PC-9 (cell line): ENCODE measurements at regions of chr9 and their contacts with region 1.

Region 1: DNA sequence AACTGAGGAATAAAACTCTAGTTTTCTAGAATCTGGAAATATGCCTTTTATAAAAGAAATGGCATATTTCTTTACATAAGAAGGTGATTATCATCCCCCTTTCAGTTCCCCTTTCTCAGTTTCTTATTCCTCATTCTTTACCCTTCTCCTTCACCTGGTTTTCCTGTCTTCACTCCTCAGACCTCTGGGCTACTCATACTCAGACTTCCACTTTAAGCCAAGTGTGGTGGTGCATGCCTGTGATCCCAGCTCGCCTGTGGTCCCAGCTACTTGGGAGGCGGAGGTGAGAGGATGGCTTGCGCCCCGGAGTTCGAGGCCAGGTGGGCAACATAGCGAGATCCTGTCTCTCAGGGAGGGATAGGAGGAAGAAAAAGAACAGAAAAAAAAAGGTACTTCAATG is 57.2 kb downstream of the RANBP6 start:
- DNase-seq: no peak
- H3K4me3 ChIP-seq: no peak overlapping the region
- H3K27ac ChIP-seq: no peak overlapping the region
- H3K4me1 ChIP-seq: no peaks in the 10 kb centered on the region
- H3K27me3 ChIP-seq: no peaks in the 10 kb centered on the region
- CTCF ChIP-seq: no peak

Region 2: GRCh38 chr9:4679268-4680172 is 1278.8 kb before region 1 on chr9 and contains the start of gene CDC37L1:
- CTCF ChIA-PET with region 1: no interaction called
- POLR2A ChIA-PET with region 1: interaction called, 19 read pairs
- intact Hi-C with region 1: no loop called
- DNase-seq: peak; percentile 81 to 93
- H3K4me3 ChIP-seq: peak within 1 kb of the TSS; percentile 87
- H3K27ac ChIP-seq: peak within 1 kb of the TSS; percentile 82
- H3K4me1 ChIP-seq: peaks cover 20% of the 10 kb centered on the region
- H3K27me3 ChIP-seq: no peaks in the 10 kb centered on the region
- CTCF ChIP-seq: peak; percentile 63
- total RNA-seq, gene CDC37L1: 6.7 and 7.7 TPM in 2 replicates

Region 3: DNA sequence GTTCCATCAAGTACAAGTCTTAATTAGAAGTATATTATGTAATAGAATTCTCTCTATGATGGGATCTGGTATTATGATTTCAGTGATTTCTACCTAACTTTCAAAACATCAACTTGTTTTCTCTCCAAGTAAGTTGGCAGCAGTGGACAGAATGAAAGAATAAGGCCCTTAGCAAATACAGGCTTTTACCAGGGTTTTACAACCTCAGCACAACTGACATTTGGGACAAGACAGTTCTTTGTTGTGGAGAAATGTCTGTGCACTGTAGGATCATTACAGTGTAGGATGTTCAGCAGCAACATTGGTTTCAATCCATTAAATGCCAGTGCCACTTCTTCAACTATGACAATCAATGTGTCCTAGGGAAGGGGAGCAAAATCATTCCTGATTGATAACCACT is 18.7 kb before region 1 on chr9:
- CTCF ChIA-PET with region 1: no interaction called
- POLR2A ChIA-PET with region 1: no interaction called
- intact Hi-C with region 1: no loop called
- DNase-seq: no peak
- H3K4me3 ChIP-seq: no peak overlapping the region
- H3K27ac ChIP-seq: no peak overlapping the region
- H3K4me1 ChIP-seq: no peaks in the 10 kb centered on the region
- H3K27me3 ChIP-seq: no peaks in the 10 kb centered on the region
- CTCF ChIP-seq: no peak